ENCODE measurements at regions of chr13 and their contacts with region 1.

Region 1: GRCh38 chr13:20828539-20829364 is 55.0 kb upstream of the EEF1AKMT1 start:
- DNase-seq: peak; percentile 26
- ATAC-seq: peak; percentile 90
- H3K4me3 ChIP-seq: no peak overlapping the region
- H3K27ac ChIP-seq: no peak overlapping the region
- H3K4me1 ChIP-seq: no peaks in the 10 kb centered on the region
- H3K27me3 ChIP-seq: no peaks in the 10 kb centered on the region
- CTCF ChIP-seq: peak; percentile 75 to 80 (median 76)
- EP300 ChIP-seq: no peak
- POLR2A ChIP-seq: no peak
- RAD21 ChIP-seq: peak; percentile 81

Region 2: GRCh38 chr13:20182231-20182846 is 646.4 kb before region 1 on chr13:
- CTCF ChIA-PET with region 1: no interaction called
- POLR2A ChIA-PET with region 1: no interaction called
- RAD21 ChIA-PET with region 1: no interaction called
- SMC1A ChIA-PET with region 1: no interaction called
- in situ Hi-C with region 1: loop called (anchors 25 kb)
- intact Hi-C with region 1: no loop called
- DNase-seq: peak; percentile 35
- ATAC-seq: peak; percentile 97
- H3K4me3 ChIP-seq: no peak overlapping the region
- H3K27ac ChIP-seq: no peak overlapping the region
- H3K4me1 ChIP-seq: no peaks in the 10 kb centered on the region
- H3K27me3 ChIP-seq: no peaks in the 10 kb centered on the region
- CTCF ChIP-seq: peak; percentile 76 to 85 (median 85)
- EP300 ChIP-seq: no peak
- POLR2A ChIP-seq: no peak
- RAD21 ChIP-seq: peak; percentile 79

Region 3: GRCh38 chr13:20713751-20714150 is 115.0 kb before region 1 on chr13:
- CTCF ChIA-PET with region 1: interaction called, 15 read pairs
- POLR2A ChIA-PET with region 1: no interaction called
- RAD21 ChIA-PET with region 1: interaction called, 4 read pairs
- SMC1A ChIA-PET with region 1: interaction called, 4 read pairs
- in situ Hi-C with region 1: no loop called
- intact Hi-C with region 1: loop called (anchors 2 kb)
- DNase-seq: no peak
- ATAC-seq: no peak
- H3K4me3 ChIP-seq: no peak overlapping the region
- H3K27ac ChIP-seq: no peak overlapping the region
- H3K4me1 ChIP-seq: no peaks in the 10 kb centered on the region
- H3K27me3 ChIP-seq: no peaks in the 10 kb centered on the region
- CTCF ChIP-seq: no peak
- EP300 ChIP-seq: no peak
- POLR2A ChIP-seq: no peak
- RAD21 ChIP-seq: no peak

Region 4: DNA sequence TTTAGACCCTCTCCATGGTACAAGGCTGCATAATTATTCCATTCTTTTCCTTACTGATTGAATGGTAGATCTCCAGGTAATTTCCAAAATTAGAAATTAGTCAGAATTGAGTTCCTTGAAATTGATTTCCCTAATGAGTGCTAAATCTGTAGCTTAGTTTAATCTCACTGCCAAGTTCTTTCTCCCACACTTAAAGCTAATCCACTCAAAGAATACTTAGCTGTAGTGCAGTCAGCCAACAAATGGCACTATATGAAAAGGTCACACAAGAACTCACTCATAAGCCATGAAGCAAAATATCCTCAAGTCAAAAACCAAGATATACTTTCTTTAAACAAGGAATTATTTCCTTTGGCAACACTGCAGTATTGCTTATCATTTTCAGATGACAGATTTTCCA is 11.8 kb after region 1 on chr13:
- CTCF ChIA-PET with region 1: interaction called, 35 read pairs
- POLR2A ChIA-PET with region 1: no interaction called
- RAD21 ChIA-PET with region 1: no interaction called
- SMC1A ChIA-PET with region 1: interaction called, 8 read pairs
- in situ Hi-C with region 1: no loop called
- intact Hi-C with region 1: no loop called
- DNase-seq: no peak
- ATAC-seq: no peak
- H3K4me3 ChIP-seq: no peak overlapping the region
- H3K27ac ChIP-seq: no peak overlapping the region
- H3K4me1 ChIP-seq: no peaks in the 10 kb centered on the region
- H3K27me3 ChIP-seq: no peaks in the 10 kb centered on the region
- CTCF ChIP-seq: no peak
- EP300 ChIP-seq: no peak
- POLR2A ChIP-seq: no peak
- RAD21 ChIP-seq: no peak

Region 5: GRCh38 chr13:20924758-20925394 is 96.1 kb after region 1 on chr13:
- CTCF ChIA-PET with region 1: interaction called, 5 read pairs
- POLR2A ChIA-PET with region 1: no interaction called
- RAD21 ChIA-PET with region 1: interaction called, 6 read pairs
- SMC1A ChIA-PET with region 1: interaction called, 7 read pairs
- in situ Hi-C with region 1: no loop called
- intact Hi-C with region 1: loop called (anchors 5 kb)
- DNase-seq: no peak
- ATAC-seq: peak; percentile 79
- H3K4me3 ChIP-seq: no peak overlapping the region
- H3K27ac ChIP-seq: no peak overlapping the region
- H3K4me1 ChIP-seq: no peaks in the 10 kb centered on the region
- H3K27me3 ChIP-seq: no peaks in the 10 kb centered on the region
- CTCF ChIP-seq: peak; percentile 76 to 80 (median 77)
- EP300 ChIP-seq: no peak
- POLR2A ChIP-seq: no peak
- RAD21 ChIP-seq: peak; percentile 89